ENCODE measurements at regions of chr17 and their contacts with region 1.

Region 1: GRCh38 chr17:37047631-37048104 is 98.9 kb downstream of the AATF start:
- DNase-seq: peak; percentile 91
- ATAC-seq: peak; percentile 86
- H3K4me3 Mint-ChIP-seq: no peak overlapping the region
- H3K27ac Mint-ChIP-seq: peak overlapping the region; percentile 47
- H3K4me1 Mint-ChIP-seq: peaks cover 11% of the 10 kb centered on the region
- H3K27me3 Mint-ChIP-seq: no peaks in the 10 kb centered on the region
- CTCF ChIP-seq: peak; percentile 84

Region 2: GRCh38 chr17:36629252-36629847 is 418.3 kb before region 1 on chr17:
- CTCF ChIA-PET with region 1: interaction called, 34 read pairs
- POLR2A ChIA-PET with region 1: no interaction called
- intact Hi-C with region 1: loop called (anchors 5 kb)
- DNase-seq: peak; percentile 85
- ATAC-seq: peak; percentile 96
- H3K4me3 Mint-ChIP-seq: no peak overlapping the region
- H3K27ac Mint-ChIP-seq: no peak overlapping the region
- H3K4me1 Mint-ChIP-seq: no peaks in the 10 kb centered on the region
- H3K27me3 Mint-ChIP-seq: peaks cover 5% of the 10 kb centered on the region
- CTCF ChIP-seq: peak; percentile 95

Region 3: GRCh38 chr17:36655726-36656125 is 391.9 kb before region 1 on chr17:
- CTCF ChIA-PET with region 1: interaction called, 10 read pairs
- POLR2A ChIA-PET with region 1: no interaction called
- intact Hi-C with region 1: no loop called
- DNase-seq: no peak
- ATAC-seq: no peak
- H3K4me3 Mint-ChIP-seq: no peak overlapping the region
- H3K27ac Mint-ChIP-seq: no peak overlapping the region
- H3K4me1 Mint-ChIP-seq: peaks cover 8% of the 10 kb centered on the region
- H3K27me3 Mint-ChIP-seq: peaks cover 24% of the 10 kb centered on the region
- CTCF ChIP-seq: no peak

Region 4: GRCh38 chr17:37060094-37060493 is 12.4 kb after region 1 on chr17:
- CTCF ChIA-PET with region 1: interaction called, 13 read pairs
- POLR2A ChIA-PET with region 1: no interaction called
- intact Hi-C with region 1: no loop called
- DNase-seq: no peak
- ATAC-seq: no peak
- H3K4me3 Mint-ChIP-seq: no peak overlapping the region
- H3K27ac Mint-ChIP-seq: no peak overlapping the region
- H3K4me1 Mint-ChIP-seq: no peaks in the 10 kb centered on the region
- H3K27me3 Mint-ChIP-seq: no peaks in the 10 kb centered on the region
- CTCF ChIP-seq: no peak

Region 5: GRCh38 chr17:37103231-37103630 is 55.6 kb after region 1 on chr17:
- CTCF ChIA-PET with region 1: no interaction called
- POLR2A ChIA-PET with region 1: no interaction called
- intact Hi-C with region 1: no loop called
- DNase-seq: no peak
- ATAC-seq: no peak
- H3K4me3 Mint-ChIP-seq: no peak overlapping the region
- H3K27ac Mint-ChIP-seq: no peak overlapping the region
- H3K4me1 Mint-ChIP-seq: no peaks in the 10 kb centered on the region
- H3K27me3 Mint-ChIP-seq: no peaks in the 10 kb centered on the region
- CTCF ChIP-seq: no peak

Region 6: GRCh38 chr17:37158290-37158689 is 110.6 kb after region 1 on chr17:
- CTCF ChIA-PET with region 1: no interaction called
- POLR2A ChIA-PET with region 1: no interaction called
- intact Hi-C with region 1: no loop called
- DNase-seq: no peak
- ATAC-seq: no peak
- H3K4me3 Mint-ChIP-seq: no peak overlapping the region
- H3K27ac Mint-ChIP-seq: no peak overlapping the region
- H3K4me1 Mint-ChIP-seq: no peaks in the 10 kb centered on the region
- H3K27me3 Mint-ChIP-seq: no peaks in the 10 kb centered on the region
- CTCF ChIP-seq: no peak

Measured in activated CD8-positive, alpha-beta T cell treated with anti-CD3 and anti-CD28 coated beads for 36 hours (primary cell).